ENCODE measurements at regions of chr1 and their contacts with region 1.

Region 1: DNA sequence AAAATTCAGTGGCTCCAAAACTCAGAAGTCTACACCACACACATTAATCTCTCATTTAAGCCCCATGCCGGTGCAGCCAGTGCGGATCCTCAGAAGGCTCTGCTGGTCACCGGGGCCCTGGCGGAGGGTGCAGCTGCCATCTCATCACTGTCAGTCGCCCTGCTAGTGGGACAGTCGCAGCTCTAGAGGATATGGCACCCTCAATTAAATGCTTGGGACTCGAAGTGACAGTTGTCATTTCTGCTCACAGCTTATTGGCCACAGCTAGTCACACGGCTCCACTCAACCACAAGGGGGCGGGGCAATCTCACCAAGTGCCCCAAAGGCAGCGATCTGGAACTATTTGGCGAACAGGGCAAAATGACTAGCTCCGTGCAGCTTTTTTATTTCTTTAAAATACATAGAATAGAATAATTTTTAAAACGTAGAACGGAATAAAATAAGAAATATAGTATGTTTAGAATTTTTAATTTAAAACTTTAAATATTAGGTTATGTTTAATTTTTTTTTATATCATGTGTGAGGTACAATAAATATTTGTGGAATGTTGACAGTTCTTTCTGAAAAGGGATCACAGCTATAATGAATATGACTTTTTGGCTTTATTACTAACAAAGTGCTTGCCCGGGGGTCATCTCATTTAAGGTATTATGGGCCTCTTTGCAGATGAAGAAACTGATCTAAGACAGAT is 8.0 kb upstream of the MAN1C1 start:
- DNase-seq: no peak
- H3K4me3 ChIP-seq: no peak overlapping the region
- H3K27me3 ChIP-seq: peaks cover 22% of the 10 kb centered on the region
- CTCF ChIP-seq: peak; percentile 60

Region 2: DNA sequence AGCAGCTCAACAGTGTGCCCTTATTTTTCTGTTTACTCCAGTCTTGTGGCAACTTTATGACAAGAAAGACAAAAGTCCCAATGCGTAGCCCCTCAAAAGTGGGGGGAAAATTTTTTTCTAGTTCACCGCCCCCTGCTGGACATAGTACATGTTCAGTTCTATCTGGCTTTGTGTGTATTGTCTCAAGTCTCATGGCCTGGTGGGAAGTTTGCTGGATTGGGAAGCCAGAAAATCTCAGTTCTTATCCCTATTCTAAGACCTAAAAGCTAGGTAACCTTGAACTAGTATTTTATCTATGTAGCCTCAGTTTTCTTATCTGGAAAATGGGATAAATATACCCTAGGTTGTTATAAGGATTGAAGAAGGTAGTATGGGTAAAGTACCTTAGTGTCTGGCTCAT is 121.0 kb before region 1 on chr1:
- CTCF ChIA-PET with region 1: no interaction called
- POLR2A ChIA-PET with region 1: no interaction called
- DNase-seq: no peak
- H3K4me3 ChIP-seq: no peak overlapping the region
- H3K27me3 ChIP-seq: no peaks in the 10 kb centered on the region
- CTCF ChIP-seq: peak; percentile 38

Region 3: DNA sequence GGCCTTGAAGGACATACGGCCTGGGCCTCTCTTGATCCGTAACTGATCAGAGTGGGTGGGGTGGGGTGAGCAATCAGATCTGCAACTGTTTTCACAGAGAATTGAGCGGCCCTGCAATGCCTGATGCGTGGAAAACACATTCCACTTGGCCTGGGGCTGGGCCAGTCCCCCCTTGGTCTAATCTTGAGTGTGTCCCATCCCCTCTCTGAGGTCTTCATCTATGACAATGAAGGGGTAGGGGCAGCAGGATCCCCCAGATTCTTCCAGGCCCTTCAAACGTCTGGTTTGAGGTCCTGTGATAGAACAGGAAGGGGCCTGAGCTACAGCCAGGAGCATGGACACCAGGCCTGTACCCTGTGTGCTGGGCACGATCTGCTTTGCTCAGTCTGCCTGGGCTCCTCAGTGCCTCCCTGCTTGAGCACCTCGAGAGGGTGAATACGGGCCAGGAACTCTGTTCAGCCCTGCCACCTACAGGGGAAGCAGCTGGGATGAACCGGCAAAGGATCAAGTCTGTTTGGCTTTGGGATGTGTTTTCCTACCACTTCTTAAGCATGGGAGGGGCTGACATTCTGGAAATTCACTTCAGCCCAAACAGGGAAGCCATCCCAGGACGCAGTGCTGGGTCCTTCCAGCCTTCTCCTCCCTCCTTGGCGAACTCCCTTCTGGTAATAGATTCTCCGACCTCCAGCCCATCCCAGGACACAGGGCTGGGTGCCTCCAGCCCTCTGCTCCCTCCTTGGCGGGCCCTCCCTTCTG is 135.4 kb after region 1 on chr1:
- CTCF ChIA-PET with region 1: interaction called, 20 read pairs
- POLR2A ChIA-PET with region 1: no interaction called
- DNase-seq: peak; percentile 5
- H3K4me3 ChIP-seq: no peak overlapping the region
- H3K27me3 ChIP-seq: peaks cover 5% of the 10 kb centered on the region
- CTCF ChIP-seq: peak; percentile 69

Region 4: DNA sequence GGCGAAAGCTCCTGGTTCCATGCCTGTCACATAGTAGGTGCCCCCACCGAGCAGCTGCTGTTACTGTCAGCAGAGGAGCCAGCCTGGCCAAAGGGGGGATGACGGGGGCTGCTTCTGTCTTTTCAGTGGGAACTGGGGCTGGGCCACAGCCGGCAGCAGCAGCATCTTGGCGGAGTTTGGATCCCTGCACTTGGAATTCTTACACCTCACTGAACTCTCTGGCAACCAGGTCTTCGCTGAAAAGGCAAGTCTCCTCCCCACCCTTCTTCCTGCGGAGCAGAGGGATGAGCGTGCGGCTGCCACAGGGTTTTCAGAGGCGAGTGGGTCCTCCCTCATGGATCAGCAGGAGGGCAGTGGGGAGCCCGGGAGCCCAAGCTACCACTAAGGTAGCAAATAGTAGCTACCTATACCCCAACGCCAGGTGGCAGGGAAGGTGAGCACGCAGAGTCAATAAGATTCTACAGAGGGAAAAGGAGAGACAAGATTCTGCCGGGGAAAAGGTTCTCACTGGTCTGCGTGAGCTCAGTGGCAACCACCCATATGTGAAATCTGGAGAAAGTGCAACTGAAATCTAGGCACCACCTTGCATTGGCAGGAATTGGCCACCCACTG is 149.9 kb after region 1 on chr1:
- CTCF ChIA-PET with region 1: no interaction called
- POLR2A ChIA-PET with region 1: no interaction called
- DNase-seq: no peak
- H3K4me3 ChIP-seq: no peak overlapping the region
- H3K27me3 ChIP-seq: peaks cover 20% of the 10 kb centered on the region
- CTCF ChIP-seq: no peak

Region 5: DNA sequence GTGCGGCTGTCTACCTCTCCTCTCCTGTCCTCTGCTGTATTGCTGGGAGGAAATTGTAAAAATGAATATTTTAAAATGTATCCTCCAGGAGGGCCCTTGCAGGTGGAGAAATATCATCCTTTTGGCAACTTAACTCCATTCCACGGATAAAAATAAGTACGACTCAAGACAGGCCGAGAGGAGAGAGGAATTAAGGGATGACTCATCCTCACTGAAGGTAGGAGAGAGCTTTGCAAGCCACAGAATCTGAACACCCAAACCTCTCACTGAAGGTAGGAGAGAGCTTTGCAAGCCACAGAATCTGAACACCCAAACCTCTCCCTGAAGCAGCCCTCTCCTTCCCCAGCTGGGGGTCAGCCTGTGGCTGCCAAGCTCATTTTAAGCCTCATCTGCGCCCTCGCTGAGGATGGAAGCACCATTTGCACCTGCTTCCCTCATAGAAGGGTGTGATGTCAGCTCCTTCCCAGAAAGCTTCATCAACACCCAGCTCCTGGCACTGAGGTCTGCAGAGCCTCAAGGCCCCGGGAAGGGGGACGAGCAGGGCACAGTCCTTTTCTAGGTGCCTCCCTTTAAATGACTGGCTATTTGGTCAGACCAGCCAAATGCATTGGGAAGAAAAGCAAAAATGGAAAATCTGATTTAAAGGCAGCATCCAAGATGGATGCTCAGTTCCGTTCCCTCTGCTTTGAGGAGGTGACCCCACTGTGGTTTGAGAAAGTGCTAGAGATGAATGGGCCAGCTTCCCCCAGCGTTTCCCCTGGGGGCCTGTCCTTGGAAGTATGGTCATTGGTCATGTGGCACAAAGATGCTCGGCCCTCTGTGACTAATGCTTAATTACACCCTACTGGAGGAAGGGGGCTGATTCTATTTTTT is 178.5 kb after region 1 on chr1:
- CTCF ChIA-PET with region 1: interaction called, 125 read pairs
- POLR2A ChIA-PET with region 1: no interaction called
- DNase-seq: no peak
- H3K4me3 ChIP-seq: no peak overlapping the region
- H3K27me3 ChIP-seq: peaks cover 8% of the 10 kb centered on the region
- CTCF ChIP-seq: no peak

Region 6: GRCh38 chr1:25796811-25797458 is 188.3 kb after region 1 on chr1:
- CTCF ChIA-PET with region 1: interaction called, 125 read pairs
- POLR2A ChIA-PET with region 1: no interaction called
- DNase-seq: no peak
- H3K4me3 ChIP-seq: no peak overlapping the region
- H3K27me3 ChIP-seq: peaks cover 2% of the 10 kb centered on the region
- CTCF ChIP-seq: peak; percentile 89

Region 7: GRCh38 chr1:25810341-25811299 is 202.0 kb after region 1 on chr1:
- CTCF ChIA-PET with region 1: interaction called, 18 read pairs
- POLR2A ChIA-PET with region 1: no interaction called
- DNase-seq: no peak
- H3K4me3 ChIP-seq: no peak overlapping the region
- H3K27me3 ChIP-seq: no peaks in the 10 kb centered on the region
- CTCF ChIP-seq: peak; percentile 92